Heart left ventricle (tissue), 16 donors: ENCODE measurements at regions of chr2 and their contacts with region 1.

Region 1: GRCh38 chr2:28687640-28688381 is 63.8 kb upstream of the PPP1CB start:
- DNase-seq: no peak
- ATAC-seq: no peak
- H3K4me3 ChIP-seq: no peak overlapping the region
- H3K27ac ChIP-seq: no peak overlapping the region
- H3K4me1 ChIP-seq: peaks cover 10 to 40% (median 25%) of the 10 kb centered on the region in 12 donors
- H3K27me3 ChIP-seq: no peaks in the 10 kb centered on the region
- CTCF ChIP-seq: no peak
- POLR2A ChIP-seq: no peak

Region 2: DNA sequence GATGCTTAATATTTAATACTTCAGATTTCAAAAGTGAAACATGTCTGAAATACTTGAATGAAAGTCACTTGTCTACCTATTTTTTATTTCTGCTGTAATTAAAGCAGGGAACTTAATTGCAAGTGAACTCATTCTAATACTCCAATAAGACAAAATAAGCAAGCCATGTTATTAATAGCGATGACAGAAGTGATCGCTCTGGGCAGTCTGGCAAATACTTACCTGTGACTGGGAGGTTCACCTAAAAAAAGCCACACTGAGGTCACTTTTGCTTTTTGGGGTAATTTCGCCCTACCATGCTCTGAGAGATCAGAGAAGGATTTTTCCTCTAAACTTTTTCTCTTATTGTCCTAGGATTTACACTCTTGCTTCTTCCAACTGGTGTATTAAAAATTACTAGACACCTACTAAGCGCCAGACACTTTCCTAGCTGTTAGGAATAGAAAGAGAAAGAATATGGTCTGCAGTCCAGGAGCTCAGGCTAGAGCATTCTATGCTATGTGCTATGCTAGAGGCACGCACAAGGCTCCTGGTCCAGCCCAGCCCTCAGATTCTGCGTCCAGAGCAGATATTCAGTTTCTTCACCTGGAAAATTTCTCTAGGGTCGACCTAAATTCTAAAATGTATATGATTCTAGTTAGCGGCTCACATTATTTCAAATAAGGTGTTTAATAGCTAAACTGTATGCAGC is 37.4 kb after region 1 on chr2:
- intact Hi-C with region 1: no loop called
- DNase-seq: no peak
- ATAC-seq: peak in 3 of 4 donors; percentile 41 to 57 (median 55)
- H3K4me3 ChIP-seq: no peak overlapping the region
- H3K27ac ChIP-seq: peak overlapping the region in 9 of 12 donors; percentile 29 to 72 (median 47)
- H3K4me1 ChIP-seq: peaks cover 0 to 18% (median 3%) of the 10 kb centered on the region in 12 donors
- H3K27me3 ChIP-seq: no peaks in the 10 kb centered on the region
- CTCF ChIP-seq: no peak
- POLR2A ChIP-seq: no peak

Region 3: DNA sequence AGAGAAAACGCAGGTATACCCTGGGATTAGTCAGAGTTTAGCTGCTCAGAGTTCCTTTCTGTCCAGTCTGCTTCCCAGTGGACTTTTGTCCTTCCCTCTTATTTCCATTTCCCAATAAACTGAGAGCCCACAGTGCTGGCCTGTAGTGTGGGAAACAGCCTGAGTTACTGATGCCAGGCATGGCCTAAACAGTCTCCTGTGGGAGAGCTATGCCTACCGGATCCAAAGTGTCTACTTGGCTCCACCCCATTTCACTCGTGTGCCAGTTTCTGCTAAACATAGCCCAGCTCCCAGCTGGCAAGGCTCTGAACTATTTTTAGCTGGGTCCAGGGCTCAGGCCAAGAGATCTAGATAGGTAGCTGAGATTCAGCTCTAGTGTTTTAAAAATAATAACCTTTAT is 48.2 kb after region 1 on chr2:
- intact Hi-C with region 1: loop called in 1 of 10 experiments (anchors 5 kb)
- DNase-seq: peak in 4 of 5 donors; percentile 81 to 89 (median 86)
- ATAC-seq: peak; percentile 98 to 99 (median 98)
- H3K4me3 ChIP-seq: peak overlapping the region in 9 of 12 donors; percentile 15 to 47 (median 36)
- H3K27ac ChIP-seq: peak overlapping the region; percentile 50 to 85 (median 76)
- H3K4me1 ChIP-seq: peaks cover 0 to 20% (median 7%) of the 10 kb centered on the region in 12 donors
- H3K27me3 ChIP-seq: no peaks in the 10 kb centered on the region
- CTCF ChIP-seq: no peak
- POLR2A ChIP-seq: peak in 1 of 2 donors; percentile 33